ENCODE measurements at regions of chr5 and their contacts with region 1.

Region 1: GRCh38 chr5:35926389-35927051 is 11.9 kb downstream of the CAPSL start:
- DNase-seq: peak; percentile 64
- H3K4me3 Mint-ChIP-seq: no peak overlapping the region
- H3K27ac Mint-ChIP-seq: no peak overlapping the region
- H3K4me1 Mint-ChIP-seq: peaks cover 39% of the 10 kb centered on the region
- H3K27me3 Mint-ChIP-seq: peaks cover 5% of the 10 kb centered on the region

Region 2: DNA sequence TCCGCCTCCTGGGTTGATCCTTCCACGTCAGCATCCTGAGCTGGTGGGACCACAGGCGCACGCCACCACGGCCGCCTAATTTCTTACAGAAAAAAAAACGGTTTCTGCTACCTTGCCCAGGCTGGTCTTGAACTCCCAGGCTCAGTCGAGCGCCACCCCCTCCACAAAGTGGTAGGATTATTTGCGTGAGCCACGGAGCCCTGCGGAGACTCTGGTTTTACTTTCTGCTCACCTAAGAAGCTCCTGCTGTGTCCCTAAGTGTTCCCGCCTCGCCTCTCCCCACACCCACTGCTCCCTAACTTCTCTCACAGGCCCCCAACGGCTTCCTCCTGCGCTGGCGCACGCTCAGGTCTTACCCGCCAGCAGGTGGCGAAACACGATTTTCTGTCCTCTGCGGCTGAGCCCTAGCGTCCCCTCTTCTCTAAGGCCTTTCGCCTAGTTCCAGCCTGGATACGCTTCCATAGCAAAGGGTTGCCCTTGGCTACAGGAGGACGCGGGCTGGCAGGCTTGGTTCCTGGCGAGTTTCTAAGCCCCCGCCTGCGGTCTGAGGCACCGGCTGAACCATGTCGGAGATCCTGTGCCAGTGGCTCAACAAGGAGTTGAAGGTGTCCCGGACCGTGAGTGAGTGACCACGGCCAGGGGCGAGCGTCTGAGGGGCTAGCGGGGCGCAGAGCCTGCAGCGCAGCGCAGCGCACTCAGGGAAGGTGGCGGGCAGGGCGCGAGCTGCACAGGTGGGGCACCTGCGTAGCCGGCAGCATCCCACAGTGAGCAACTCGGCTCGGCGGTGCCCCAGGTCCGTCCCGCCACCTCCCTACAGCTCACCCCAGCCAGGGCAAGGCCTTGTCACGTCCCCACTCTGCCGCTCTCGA is 308.9 kb before region 1 on chr5 and contains the start of gene SPEF2:
- CTCF ChIA-PET with region 1: interaction called, 42 read pairs
- POLR2A ChIA-PET with region 1: interaction called, 5 read pairs
- DNase-seq: peak; percentile 85
- H3K4me3 Mint-ChIP-seq: peak within 1 kb of the TSS; percentile 75
- H3K27ac Mint-ChIP-seq: peak within 1 kb of the TSS; percentile 87
- H3K4me1 Mint-ChIP-seq: peaks cover 41% of the 10 kb centered on the region
- H3K27me3 Mint-ChIP-seq: no peaks in the 10 kb centered on the region
- total RNA-seq, gene SPEF2: 10.8 to 13.1 TPM

Region 3: DNA sequence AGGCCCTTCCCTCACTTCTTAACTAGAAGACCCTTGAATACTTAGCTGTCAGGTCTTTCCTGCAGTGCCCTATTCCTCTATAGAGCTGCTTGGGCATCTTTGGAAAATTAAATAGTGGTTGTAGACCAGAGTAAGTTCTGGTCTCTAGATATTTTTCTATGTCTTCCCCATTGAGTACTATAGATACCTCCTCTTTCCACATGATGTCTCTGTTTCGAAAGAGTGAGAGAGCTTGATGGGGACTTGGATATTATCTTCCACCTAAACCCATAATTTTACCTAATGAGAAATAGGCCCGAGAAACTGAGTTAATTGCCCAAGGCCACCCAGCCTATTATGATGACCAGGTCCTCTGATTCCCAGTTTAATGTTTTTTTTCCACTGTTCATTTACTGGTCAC is 268.6 kb before region 1 on chr5:
- CTCF ChIA-PET with region 1: interaction called, 138 read pairs
- POLR2A ChIA-PET with region 1: no interaction called
- DNase-seq: no peak
- H3K4me3 Mint-ChIP-seq: no peak overlapping the region
- H3K27ac Mint-ChIP-seq: no peak overlapping the region
- H3K4me1 Mint-ChIP-seq: peaks cover 12% of the 10 kb centered on the region
- H3K27me3 Mint-ChIP-seq: no peaks in the 10 kb centered on the region

Region 4: GRCh38 chr5:35794684-35795375 is 131.7 kb before region 1 on chr5:
- CTCF ChIA-PET with region 1: interaction called, 17 read pairs
- POLR2A ChIA-PET with region 1: no interaction called
- DNase-seq: no peak
- H3K4me3 Mint-ChIP-seq: no peak overlapping the region
- H3K27ac Mint-ChIP-seq: peak overlapping the region; percentile 91
- H3K4me1 Mint-ChIP-seq: peaks cover 79% of the 10 kb centered on the region
- H3K27me3 Mint-ChIP-seq: no peaks in the 10 kb centered on the region

Region 5: DNA sequence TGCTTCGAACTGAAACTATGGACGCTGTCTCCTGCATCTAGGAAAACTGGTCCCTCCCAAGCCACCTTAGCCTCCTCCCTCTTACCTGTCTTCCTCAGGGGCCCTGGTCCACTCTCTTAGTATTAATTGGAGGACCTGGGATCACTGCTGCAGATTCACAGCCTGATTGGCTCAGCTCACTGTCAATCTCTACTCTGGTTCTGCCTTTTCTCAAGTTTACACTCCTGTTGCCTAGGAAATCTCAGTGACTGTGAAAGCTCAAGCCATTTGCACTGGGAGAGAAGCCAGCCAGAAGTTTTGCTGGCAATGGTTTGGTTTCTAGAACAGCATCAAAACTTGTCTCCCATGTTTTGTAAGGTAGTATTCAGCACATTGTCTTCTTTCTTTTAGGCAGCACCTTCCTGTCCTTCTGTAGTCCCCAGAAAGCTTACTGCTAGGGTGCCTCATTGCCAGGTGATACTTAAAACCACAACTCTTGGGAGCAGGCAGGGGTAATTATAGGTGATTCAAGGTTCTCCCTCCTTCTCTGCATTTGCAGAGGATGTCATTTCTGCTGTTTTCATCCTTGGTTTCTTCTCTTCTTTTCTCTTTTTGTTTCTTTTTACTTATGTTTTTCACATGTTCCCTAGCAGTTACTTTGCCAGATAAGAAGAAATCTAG is 12.2 kb after region 1 on chr5 and contains the start of gene CAPSL:
- CTCF ChIA-PET with region 1: interaction called, 12 read pairs
- POLR2A ChIA-PET with region 1: no interaction called
- DNase-seq: no peak
- H3K4me3 Mint-ChIP-seq: no peak within 1 kb of the TSS
- H3K27ac Mint-ChIP-seq: no peak within 1 kb of the TSS
- H3K4me1 Mint-ChIP-seq: no peaks in the 10 kb centered on the region
- H3K27me3 Mint-ChIP-seq: peaks cover 26% of the 10 kb centered on the region
- total RNA-seq, gene CAPSL: not detected

Region 6: DNA sequence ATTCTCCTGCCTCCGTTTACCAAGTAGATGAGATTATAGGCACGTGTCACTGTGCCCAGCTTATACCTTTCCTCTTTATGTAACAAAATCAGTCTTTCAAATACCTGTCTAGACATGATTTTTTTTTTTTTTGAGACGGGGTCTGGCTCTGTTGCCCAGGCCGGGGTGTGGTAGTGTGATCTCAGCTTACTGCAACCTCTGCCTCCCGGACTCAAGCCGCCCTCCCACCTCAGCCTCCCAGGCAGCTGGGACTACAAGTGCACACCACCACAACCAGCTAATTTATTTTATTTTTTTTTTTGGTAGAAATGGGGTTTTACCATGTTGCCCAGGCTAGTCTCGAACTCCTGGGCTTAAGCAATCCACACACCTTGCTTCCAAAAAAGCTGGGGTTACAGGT is 302.0 kb after region 1 on chr5:
- CTCF ChIA-PET with region 1: no interaction called
- POLR2A ChIA-PET with region 1: no interaction called
- DNase-seq: no peak
- H3K4me3 Mint-ChIP-seq: no peak overlapping the region
- H3K27ac Mint-ChIP-seq: no peak overlapping the region
- H3K4me1 Mint-ChIP-seq: no peaks in the 10 kb centered on the region
- H3K27me3 Mint-ChIP-seq: no peaks in the 10 kb centered on the region

Measured in activated CD4-positive, alpha-beta memory T cell treated with anti-CD3 and anti-CD28 coated beads, Interleukin-2, amount 10 ng/mL, durations not matched to agents 7 days and 5 days (primary cell).